Keratinocyte (primary cell): ENCODE measurements at regions of chr6 and their contacts with region 1.

Region 1: GRCh38 chr6:111030008-111031007 is 48.5 kb downstream of the RPF2 start:
- DNase-seq: no peak
- H3K4me3 ChIP-seq: no peak overlapping the region
- H3K27ac ChIP-seq: no peak overlapping the region
- H3K4me1 ChIP-seq: peaks cover 5% of the 10 kb centered on the region
- H3K27me3 ChIP-seq: no peaks in the 10 kb centered on the region
- CTCF ChIP-seq: no peak

Region 2: GRCh38 chr6:110618591-110619267 is 411.6 kb before region 1 on chr6:
- dilution Hi-C with region 1: no loop called
- DNase-seq: no peak
- H3K4me3 ChIP-seq: no peak overlapping the region
- H3K27ac ChIP-seq: no peak overlapping the region
- H3K4me1 ChIP-seq: peaks cover 11% of the 10 kb centered on the region
- H3K27me3 ChIP-seq: no peaks in the 10 kb centered on the region
- CTCF ChIP-seq: peak in 2 of 3 experiments; percentile 17 to 18

Region 3: GRCh38 chr6:110971468-110971867 is 58.8 kb before region 1 on chr6:
- dilution Hi-C with region 1: no loop called
- DNase-seq: no peak
- H3K4me3 ChIP-seq: no peak overlapping the region
- H3K27ac ChIP-seq: no peak overlapping the region
- H3K4me1 ChIP-seq: peaks cover 8% of the 10 kb centered on the region
- H3K27me3 ChIP-seq: no peaks in the 10 kb centered on the region
- CTCF ChIP-seq: no peak

Region 4: GRCh38 chr6:111210194-111210728 is 180.0 kb after region 1 on chr6:
- dilution Hi-C with region 1: loop called (anchors 25 kb)
- DNase-seq: no peak
- H3K4me3 ChIP-seq: no peak overlapping the region
- H3K27ac ChIP-seq: no peak overlapping the region
- H3K4me1 ChIP-seq: no peaks in the 10 kb centered on the region
- H3K27me3 ChIP-seq: no peaks in the 10 kb centered on the region
- CTCF ChIP-seq: peak; percentile 33 to 76 (median 62)

Region 5: DNA sequence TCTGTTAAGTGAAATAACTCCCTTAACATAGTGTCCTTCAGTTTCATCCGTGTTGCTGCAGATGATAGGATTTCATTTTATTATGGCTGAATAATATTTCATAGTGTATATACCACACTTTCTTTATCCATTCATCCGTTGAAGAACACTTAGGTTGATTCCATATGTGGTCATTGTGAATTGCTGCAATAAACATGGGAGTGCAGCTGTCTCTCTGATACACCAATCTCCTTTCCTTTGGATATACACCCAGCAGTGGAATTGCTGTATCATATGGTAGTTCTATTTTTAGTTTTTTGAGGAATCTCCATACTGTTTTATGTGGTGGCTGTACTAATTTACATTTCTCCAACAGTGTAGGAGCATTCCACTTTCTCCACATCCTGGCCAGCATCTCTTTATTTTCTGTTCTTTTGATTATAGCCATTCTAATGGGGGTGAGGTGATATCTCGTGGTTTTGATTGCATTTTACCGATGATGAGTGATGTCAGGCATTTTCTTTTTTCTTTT is 250.2 kb after region 1 on chr6:
- dilution Hi-C with region 1: no loop called
- DNase-seq: no peak
- H3K4me3 ChIP-seq: no peak overlapping the region
- H3K27ac ChIP-seq: no peak overlapping the region
- H3K4me1 ChIP-seq: no peaks in the 10 kb centered on the region
- H3K27me3 ChIP-seq: no peaks in the 10 kb centered on the region
- CTCF ChIP-seq: no peak

Region 6: GRCh38 chr6:111478749-111479148 is 448.4 kb after region 1 on chr6:
- dilution Hi-C with region 1: no loop called
- DNase-seq: no peak
- H3K4me3 ChIP-seq: no peak overlapping the region
- H3K27ac ChIP-seq: no peak overlapping the region
- H3K4me1 ChIP-seq: peaks cover 27% of the 10 kb centered on the region
- H3K27me3 ChIP-seq: no peaks in the 10 kb centered on the region
- CTCF ChIP-seq: peak in 2 of 3 experiments; percentile 31 to 50